ENCODE measurements at regions of chr3 and their contacts with region 1.

Region 1: GRCh38 chr3:49171119-49171774 is at the start of gene KLHDC8B:
- DNase-seq: peak; percentile 95
- H3K4me3 ChIP-seq: peak within 1 kb of the TSS; percentile 44 to 94 (median 71)
- H3K27ac ChIP-seq: peak within 1 kb of the TSS; percentile 24
- H3K4me1 ChIP-seq: peaks cover 25% of the 10 kb centered on the region
- H3K27me3 ChIP-seq: no peaks in the 10 kb centered on the region
- CTCF ChIP-seq: peak; percentile 93 to 99
- POLR2A ChIP-seq: peak; percentile 69
- total RNA-seq, gene KLHDC8B: 22.9 and 36.0 TPM in 2 replicates

Region 2: DNA sequence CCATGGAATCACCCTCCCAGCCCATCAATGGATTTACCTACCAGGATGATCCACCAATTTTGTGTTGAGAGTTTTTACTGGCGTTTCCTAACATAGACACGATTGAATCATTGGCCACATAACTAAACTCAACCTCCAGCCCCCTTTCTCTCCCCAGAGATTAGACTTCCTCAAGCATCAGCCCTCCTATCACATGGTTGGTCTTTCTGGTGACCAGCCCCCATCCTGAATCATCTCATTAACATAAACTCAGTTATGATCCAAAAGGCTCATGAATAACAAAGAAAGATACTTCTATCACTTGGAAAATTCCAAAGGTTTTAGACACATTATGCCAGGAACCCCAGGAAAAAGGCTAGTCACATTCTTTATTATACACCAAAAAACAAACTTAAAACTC is 344.8 kb before region 1 on chr3:
- CTCF ChIA-PET with region 1: no interaction called
- POLR2A ChIA-PET with region 1: no interaction called
- dilution Hi-C with region 1: no loop called
- intact Hi-C with region 1: no loop called
- DNase-seq: no peak
- H3K4me3 ChIP-seq: no peak overlapping the region
- H3K27ac ChIP-seq: no peak overlapping the region
- H3K4me1 ChIP-seq: no peaks in the 10 kb centered on the region
- H3K27me3 ChIP-seq: no peaks in the 10 kb centered on the region
- CTCF ChIP-seq: no peak
- POLR2A ChIP-seq: no peak

Region 3: DNA sequence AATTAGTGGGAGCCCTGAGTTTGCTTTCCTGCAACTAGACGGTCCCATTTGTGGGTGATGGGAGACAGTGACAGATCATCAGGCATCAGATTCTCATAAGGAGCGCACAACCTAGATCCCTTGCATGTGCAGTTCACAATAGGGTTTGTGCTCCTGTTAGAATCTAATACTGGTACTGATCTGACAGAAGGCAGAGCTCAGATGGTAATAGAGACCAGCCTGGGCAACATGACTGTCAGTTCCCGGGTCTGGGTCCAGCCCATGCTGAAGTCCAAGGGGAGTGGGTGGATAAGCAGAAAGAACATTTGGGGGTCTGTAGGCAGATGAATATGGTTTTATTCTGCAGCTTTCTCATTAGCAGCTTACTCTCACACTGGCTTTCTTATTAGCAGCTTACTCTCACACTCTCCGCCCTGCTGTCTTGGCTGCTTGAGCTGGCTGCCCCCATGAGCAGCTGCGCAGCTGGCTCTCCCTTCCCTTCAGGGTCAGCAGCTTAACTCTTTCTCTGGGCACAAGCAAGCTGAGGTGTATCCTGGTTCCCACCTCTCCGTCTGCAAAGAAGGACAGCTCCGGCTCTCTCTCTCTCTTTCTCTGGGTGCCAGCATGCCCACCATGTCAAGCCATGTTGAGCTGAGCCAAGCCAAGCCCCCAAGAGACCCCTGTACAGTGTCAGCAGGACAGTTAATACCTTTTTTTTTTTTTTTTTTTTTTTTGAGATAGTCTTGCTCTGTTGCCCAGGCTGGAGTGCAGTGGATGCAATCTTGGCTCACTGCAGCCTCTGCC is 46.6 kb after region 1 on chr3:
- CTCF ChIA-PET with region 1: interaction called, 5 read pairs
- POLR2A ChIA-PET with region 1: no interaction called
- dilution Hi-C with region 1: no loop called
- intact Hi-C with region 1: loop called (anchors 1 kb)
- DNase-seq: peak; percentile 64
- H3K4me3 ChIP-seq: no peak overlapping the region
- H3K27ac ChIP-seq: peak overlapping the region; percentile 70
- H3K4me1 ChIP-seq: peaks cover 5% of the 10 kb centered on the region
- H3K27me3 ChIP-seq: no peaks in the 10 kb centered on the region
- CTCF ChIP-seq: no peak
- POLR2A ChIP-seq: peak; percentile 23

Region 4: GRCh38 chr3:49276475-49277382 is 105.5 kb after region 1 on chr3 and contains the start of gene C3orf62:
- CTCF ChIA-PET with region 1: interaction called, 44 read pairs
- POLR2A ChIA-PET with region 1: no interaction called
- dilution Hi-C with region 1: no loop called
- intact Hi-C with region 1: loop called (anchors 1 kb)
- DNase-seq: peak; percentile 87
- H3K4me3 ChIP-seq: peak within 1 kb of the TSS; percentile 41 to 65 (median 53)
- H3K27ac ChIP-seq: peak within 1 kb of the TSS; percentile 88
- H3K4me1 ChIP-seq: peaks cover 18% of the 10 kb centered on the region
- H3K27me3 ChIP-seq: no peaks in the 10 kb centered on the region
- CTCF ChIP-seq: no peak
- POLR2A ChIP-seq: peak; percentile 77
- total RNA-seq, gene C3orf62: 3.9 and 5.6 TPM in 2 replicates

Region 5: GRCh38 chr3:49300595-49300994 is 129.3 kb after region 1 on chr3:
- CTCF ChIA-PET with region 1: interaction called, 11 read pairs
- POLR2A ChIA-PET with region 1: no interaction called
- dilution Hi-C with region 1: no loop called
- intact Hi-C with region 1: no loop called
- DNase-seq: no peak
- H3K4me3 ChIP-seq: no peak overlapping the region
- H3K27ac ChIP-seq: no peak overlapping the region
- H3K4me1 ChIP-seq: no peaks in the 10 kb centered on the region
- H3K27me3 ChIP-seq: no peaks in the 10 kb centered on the region
- CTCF ChIP-seq: no peak
- POLR2A ChIP-seq: no peak

Measured in endothelial cell of umbilical vein (primary cell).